WTC11 (cell line): ENCODE measurements at regions of chr9 and their contacts with region 1.

Region 1: DNA sequence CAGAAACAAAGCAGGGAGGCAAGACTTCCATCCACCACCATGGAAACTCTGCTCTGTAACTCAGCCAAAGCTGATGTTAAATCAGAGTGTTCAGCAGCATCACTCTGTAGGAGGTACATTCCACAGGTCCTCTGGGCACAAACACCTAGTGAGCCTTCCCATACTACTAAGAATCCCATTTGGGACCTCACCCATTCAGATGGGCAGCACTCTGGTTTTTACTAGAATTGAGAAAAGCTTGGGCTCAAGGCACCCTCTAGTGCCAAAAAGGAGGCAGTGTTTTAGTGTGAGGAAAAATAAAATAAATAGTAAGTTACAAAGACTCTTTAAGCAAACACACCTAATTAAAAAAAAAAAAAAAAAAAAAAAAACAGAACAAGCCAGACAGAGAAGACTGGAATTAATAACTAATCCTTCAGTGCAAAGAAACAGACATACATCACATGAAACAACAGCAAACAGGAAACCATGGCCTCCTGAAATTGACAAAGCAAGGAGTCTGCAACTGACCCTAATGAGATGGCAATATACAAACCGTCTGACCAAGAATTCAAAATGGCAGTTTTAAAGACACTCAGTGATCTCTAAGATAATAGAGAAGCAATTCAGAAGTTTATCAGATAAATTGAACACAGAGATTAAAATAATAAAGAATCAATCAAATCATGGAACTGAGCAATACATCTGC is 159.5 kb downstream of the GNA14 start:
- DNase-seq: peak; percentile 18
- ATAC-seq: peak; percentile 98
- H3K4me3 Mint-ChIP-seq: no peak overlapping the region
- H3K27ac Mint-ChIP-seq: peak overlapping the region; percentile 51; the same call in 1 of the 2 replicates
- H3K4me1 Mint-ChIP-seq: peaks cover 10% of the 10 kb centered on the region; the same call in 1 of the 2 replicates
- H3K27me3 Mint-ChIP-seq: no peaks in the 10 kb centered on the region
- CTCF ChIP-seq: no peak

Region 2: DNA sequence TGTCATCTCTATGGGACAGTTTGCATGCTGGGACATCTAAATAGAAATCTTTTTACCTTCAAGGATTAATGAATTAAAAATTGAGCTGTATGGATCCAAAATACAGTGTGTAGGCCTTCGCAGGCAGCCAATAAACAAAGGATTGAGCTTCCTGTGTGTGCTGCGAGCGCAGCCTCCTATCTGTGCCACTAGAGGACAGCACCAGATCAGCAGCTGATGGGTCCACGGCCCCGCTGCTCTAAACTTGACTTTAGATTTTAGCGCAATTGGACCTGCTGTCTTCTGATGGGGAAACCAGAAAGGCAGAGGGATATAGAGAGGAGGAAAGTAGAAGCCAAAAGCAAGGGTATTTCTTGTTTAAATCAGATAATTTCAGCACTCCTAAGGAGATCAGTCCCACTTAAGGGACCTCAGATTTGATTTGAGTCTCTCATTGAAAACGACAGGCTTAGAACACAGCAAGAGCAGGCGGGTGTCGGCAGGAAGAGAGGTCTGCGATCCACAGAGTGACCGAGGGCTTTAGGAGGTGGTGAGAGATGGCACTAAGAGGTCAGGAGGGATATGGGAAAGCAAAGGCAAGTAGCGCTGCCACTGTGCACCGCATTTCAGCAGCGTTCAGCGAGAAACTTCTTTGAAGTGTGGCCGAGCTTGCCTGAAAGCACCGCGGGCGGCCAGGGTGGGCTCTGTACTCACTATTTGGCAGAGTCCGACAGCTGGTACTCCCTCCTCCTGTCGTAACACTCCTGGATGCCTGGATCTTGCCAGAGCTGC is 54.7 kb before region 1 on chr9:
- CTCF ChIA-PET with region 1: interaction called, 21 read pairs
- POLR2A ChIA-PET with region 1: interaction called, 3 read pairs
- DNase-seq: peak; percentile 66
- ATAC-seq: peak; percentile 92
- H3K4me3 Mint-ChIP-seq: no peak overlapping the region
- H3K27ac Mint-ChIP-seq: 0 out of 2 replicates have a peak overlapping the region, but pooled peaks have one; percentile 8
- H3K4me1 Mint-ChIP-seq: peaks cover 15% of the 10 kb centered on the region
- H3K27me3 Mint-ChIP-seq: no peaks in the 10 kb centered on the region; the same call in 1 of the 2 replicates
- CTCF ChIP-seq: peak; percentile 87

Region 3: GRCh38 chr9:77475641-77476473 is 12.7 kb before region 1 on chr9:
- CTCF ChIA-PET with region 1: interaction called, 10 read pairs
- POLR2A ChIA-PET with region 1: no interaction called
- DNase-seq: no peak
- ATAC-seq: peak; percentile 78
- H3K4me3 Mint-ChIP-seq: no peak overlapping the region
- H3K27ac Mint-ChIP-seq: no peak overlapping the region
- H3K4me1 Mint-ChIP-seq: peaks cover 8% of the 10 kb centered on the region
- H3K27me3 Mint-ChIP-seq: no peaks in the 10 kb centered on the region
- CTCF ChIP-seq: no peak

Region 4: GRCh38 chr9:77648234-77649120 is 159.9 kb after region 1 on chr9 and contains the start of gene GNA14:
- CTCF ChIA-PET with region 1: interaction called, 11 read pairs
- POLR2A ChIA-PET with region 1: no interaction called
- DNase-seq: peak; percentile 75
- ATAC-seq: peak; percentile 59
- H3K4me3 Mint-ChIP-seq: peak within 1 kb of the TSS; percentile 83
- H3K27ac Mint-ChIP-seq: peak within 1 kb of the TSS; percentile 90
- H3K4me1 Mint-ChIP-seq: peaks cover 54% of the 10 kb centered on the region
- H3K27me3 Mint-ChIP-seq: peaks cover 26% of the 10 kb centered on the region
- CTCF ChIP-seq: no peak
- total RNA-seq, gene GNA14: 20.4 to 26.7 TPM (median 21.0 TPM) in 3 replicates

Region 5: GRCh38 chr9:77965445-77966123 is 477.0 kb after region 1 on chr9:
- CTCF ChIA-PET with region 1: no interaction called
- POLR2A ChIA-PET with region 1: no interaction called
- DNase-seq: no peak
- ATAC-seq: no peak
- H3K4me3 Mint-ChIP-seq: no peak overlapping the region
- H3K27ac Mint-ChIP-seq: peak overlapping the region; percentile 35; the same call in 1 of the 2 replicates
- H3K4me1 Mint-ChIP-seq: peaks cover 71% of the 10 kb centered on the region
- H3K27me3 Mint-ChIP-seq: no peaks in the 10 kb centered on the region
- CTCF ChIP-seq: no peak